ENCODE measurements at regions of chr5 and their contacts with region 1.

Region 1: GRCh38 chr5:79133657-79134451 is 22.2 kb downstream of the BHMT start:
- DNase-seq: peak; percentile 74
- ATAC-seq: peak; percentile 89
- H3K4me3 ChIP-seq: peak overlapping the region; percentile 27 to 35
- H3K27ac ChIP-seq: peak overlapping the region; percentile 39
- H3K4me1 ChIP-seq: peaks cover 5 to 16% of the 10 kb centered on the region in 2 experiments; a peak in 3 of 4 replicates
- H3K27me3 ChIP-seq: no peaks in the 10 kb centered on the region
- CTCF ChIP-seq: peak; percentile 84 to 87 (median 85)
- POLR2A ChIP-seq: no peak
- RAD21 ChIP-seq: peak; percentile 88

Region 2: DNA sequence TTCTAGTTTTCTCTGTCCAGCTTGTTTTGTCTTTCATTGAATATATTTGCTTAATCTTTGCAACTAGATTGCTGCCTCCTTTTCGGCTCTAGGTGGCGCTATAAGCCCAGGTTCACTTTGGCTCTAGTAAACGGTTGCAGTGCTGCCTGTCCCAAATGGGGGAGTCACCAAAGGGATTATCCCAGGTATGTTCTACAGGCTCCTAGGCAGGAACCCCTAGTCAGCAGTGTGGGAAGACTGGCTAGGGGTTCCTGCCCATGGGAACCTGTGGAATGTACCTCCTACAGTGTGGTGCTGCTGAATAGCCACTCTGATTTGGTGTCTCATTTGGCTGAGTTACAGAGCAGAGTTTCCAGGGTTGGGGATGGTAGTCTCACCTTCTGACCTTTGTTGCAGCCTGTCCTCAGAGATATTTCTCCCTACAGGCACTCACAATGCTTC is 233.9 kb before region 1 on chr5:
- CTCF ChIA-PET with region 1: interaction called, 39 read pairs
- POLR2A ChIA-PET with region 1: no interaction called
- RAD21 ChIA-PET with region 1: interaction called in 1 of 2 experiments, 5 read pairs
- intact Hi-C with region 1: loop called (anchors 5 kb)
- DNase-seq: peak; percentile 44
- ATAC-seq: peak; percentile 86
- H3K4me3 ChIP-seq: no peak overlapping the region
- H3K27ac ChIP-seq: no peak overlapping the region
- H3K4me1 ChIP-seq: no peaks in the 10 kb centered on the region
- H3K27me3 ChIP-seq: no peaks in the 10 kb centered on the region
- CTCF ChIP-seq: peak; percentile 76 to 96 (median 91)
- POLR2A ChIP-seq: no peak
- RAD21 ChIP-seq: peak; percentile 91

Region 3: GRCh38 chr5:79011219-79011836 is 122.5 kb before region 1 on chr5:
- CTCF ChIA-PET with region 1: interaction called, 12 read pairs
- POLR2A ChIA-PET with region 1: no interaction called
- RAD21 ChIA-PET with region 1: interaction called in 1 of 2 experiments, 4 read pairs
- intact Hi-C with region 1: no loop called
- DNase-seq: no peak
- ATAC-seq: peak; percentile 57
- H3K4me3 ChIP-seq: no peak overlapping the region
- H3K27ac ChIP-seq: no peak overlapping the region
- H3K4me1 ChIP-seq: no peaks in the 10 kb centered on the region
- H3K27me3 ChIP-seq: no peaks in the 10 kb centered on the region
- CTCF ChIP-seq: 0 out of 6 replicates have a peak, but pooled peaks of 2 of the 3 experiments have one; percentile 9 to 11
- POLR2A ChIP-seq: no peak
- RAD21 ChIP-seq: no peak

Region 4: DNA sequence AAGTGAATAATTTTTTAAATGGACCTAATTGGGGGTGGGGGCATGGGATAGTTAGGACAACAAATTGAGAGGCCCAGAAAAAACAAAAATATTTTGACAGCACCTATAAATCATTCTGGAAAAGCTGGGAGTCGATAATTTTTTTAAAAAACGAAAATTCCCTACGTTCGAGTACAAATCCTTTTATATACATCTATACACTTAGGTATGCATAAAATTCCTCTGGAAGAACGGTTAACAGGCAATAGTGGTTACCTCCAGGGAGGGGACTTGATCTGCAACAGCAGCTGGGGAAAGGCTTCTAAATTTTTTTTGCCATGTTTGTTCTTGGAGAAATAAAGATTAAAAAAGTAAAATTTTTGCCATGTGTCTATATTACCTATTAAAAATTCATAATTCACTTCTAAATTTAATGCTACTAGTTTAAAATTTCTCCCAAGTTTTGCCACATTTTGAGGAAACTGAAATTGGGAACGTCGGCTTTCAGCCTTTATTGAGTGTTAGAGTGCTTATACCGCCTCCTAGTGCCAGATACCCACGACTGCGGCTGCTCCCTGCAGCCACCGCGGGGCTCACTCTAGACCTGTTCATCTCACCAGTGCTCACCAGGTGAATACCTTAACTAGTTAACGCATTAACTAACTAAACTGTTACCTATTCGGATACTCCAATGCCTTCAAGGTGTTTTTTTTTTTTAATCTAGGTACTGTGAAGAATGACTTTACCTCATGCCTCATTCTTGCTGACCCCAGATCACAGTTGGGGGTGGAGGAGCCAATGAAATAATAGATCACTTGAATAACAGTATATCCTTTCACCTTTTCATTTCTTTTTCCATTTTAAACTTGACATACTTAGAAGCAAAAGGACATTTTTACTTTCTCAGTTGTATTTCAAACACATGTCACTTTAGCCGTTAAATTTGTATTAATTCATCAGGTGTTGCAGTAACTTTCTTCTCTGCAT is 24.0 kb before region 1 on chr5:
- CTCF ChIA-PET with region 1: interaction called, 11 read pairs
- POLR2A ChIA-PET with region 1: no interaction called
- RAD21 ChIA-PET with region 1: no interaction called
- intact Hi-C with region 1: no loop called
- DNase-seq: peak; percentile 29
- ATAC-seq: peak; percentile 92
- H3K4me3 ChIP-seq: no peak overlapping the region
- H3K27ac ChIP-seq: no peak overlapping the region
- H3K4me1 ChIP-seq: no peaks in the 10 kb centered on the region
- H3K27me3 ChIP-seq: no peaks in the 10 kb centered on the region
- CTCF ChIP-seq: peak; percentile 54 to 84 (median 81); a peak in 5 of 6 replicates
- POLR2A ChIP-seq: no peak
- RAD21 ChIP-seq: peak; percentile 60

Region 5: GRCh38 chr5:79200573-79201183 is 66.8 kb after region 1 on chr5:
- CTCF ChIA-PET with region 1: interaction called, 10 read pairs
- POLR2A ChIA-PET with region 1: no interaction called
- RAD21 ChIA-PET with region 1: interaction called in 1 of 2 experiments, 3 read pairs
- intact Hi-C with region 1: no loop called
- DNase-seq: no peak
- ATAC-seq: peak; percentile 84
- H3K4me3 ChIP-seq: no peak overlapping the region
- H3K27ac ChIP-seq: no peak overlapping the region
- H3K4me1 ChIP-seq: peaks cover 0 to 20% of the 10 kb centered on the region in 2 experiments; a peak in 3 of 4 replicates
- H3K27me3 ChIP-seq: no peaks in the 10 kb centered on the region
- CTCF ChIP-seq: peak in 2 of 3 experiments; percentile 69 to 71; a peak in 4 of 6 replicates
- POLR2A ChIP-seq: no peak
- RAD21 ChIP-seq: peak; percentile 42

Region 6: DNA sequence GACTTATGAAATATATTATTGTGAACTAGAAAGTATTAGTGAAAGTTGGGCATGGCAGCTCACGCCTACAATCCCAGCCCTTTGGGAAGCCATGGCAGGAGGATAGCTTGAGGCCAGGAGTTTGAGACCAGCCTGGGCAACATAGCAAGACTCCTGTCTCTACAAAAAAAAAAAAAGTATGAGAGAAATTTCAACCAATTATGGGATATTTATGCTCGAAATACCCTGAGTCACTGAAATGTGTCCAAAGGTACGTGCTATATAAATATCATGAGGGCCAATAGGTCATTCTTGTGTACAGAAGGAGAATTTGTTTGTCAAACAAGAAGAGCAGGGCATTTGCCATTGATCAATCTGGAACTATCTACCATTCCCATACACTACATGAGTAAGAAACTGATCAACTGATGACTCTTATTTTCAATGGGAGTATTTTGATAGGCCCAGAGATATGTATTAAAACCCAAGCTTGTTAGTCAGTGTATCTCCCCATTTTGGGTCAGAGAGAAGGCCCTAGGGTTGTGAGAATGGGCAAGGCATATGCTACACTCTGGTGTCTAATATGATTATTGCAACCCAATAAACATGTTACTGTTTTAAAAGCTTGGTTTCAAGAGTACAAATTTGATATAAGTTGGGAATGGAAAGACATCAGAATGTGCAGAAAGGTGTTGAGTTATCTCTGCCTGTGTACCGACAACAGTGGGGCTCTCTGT is 401.8 kb after region 1 on chr5:
- CTCF ChIA-PET with region 1: interaction called, 13 read pairs
- POLR2A ChIA-PET with region 1: no interaction called
- RAD21 ChIA-PET with region 1: no interaction called
- intact Hi-C with region 1: no loop called
- DNase-seq: no peak
- ATAC-seq: no peak; the same call in 1 of the 2 replicates
- H3K4me3 ChIP-seq: no peak overlapping the region
- H3K27ac ChIP-seq: no peak overlapping the region
- H3K4me1 ChIP-seq: no peaks in the 10 kb centered on the region
- H3K27me3 ChIP-seq: no peaks in the 10 kb centered on the region
- CTCF ChIP-seq: peak in 2 of 3 experiments; percentile 23 to 39; a peak in 3 of 6 replicates
- POLR2A ChIP-seq: no peak
- RAD21 ChIP-seq: peak; percentile 53

Measured in HCT116 (cell line).